Right ventricle myocardium superior (tissue), 1 donor: ENCODE measurements at regions of chr10 and their contacts with region 1.

Region 1: GRCh38 chr10:43689955-43690771 is 41.5 kb upstream of the ZNF32 start:
- DNase-seq: peak; percentile 93
- ATAC-seq: peak; percentile 98

Region 2: DNA sequence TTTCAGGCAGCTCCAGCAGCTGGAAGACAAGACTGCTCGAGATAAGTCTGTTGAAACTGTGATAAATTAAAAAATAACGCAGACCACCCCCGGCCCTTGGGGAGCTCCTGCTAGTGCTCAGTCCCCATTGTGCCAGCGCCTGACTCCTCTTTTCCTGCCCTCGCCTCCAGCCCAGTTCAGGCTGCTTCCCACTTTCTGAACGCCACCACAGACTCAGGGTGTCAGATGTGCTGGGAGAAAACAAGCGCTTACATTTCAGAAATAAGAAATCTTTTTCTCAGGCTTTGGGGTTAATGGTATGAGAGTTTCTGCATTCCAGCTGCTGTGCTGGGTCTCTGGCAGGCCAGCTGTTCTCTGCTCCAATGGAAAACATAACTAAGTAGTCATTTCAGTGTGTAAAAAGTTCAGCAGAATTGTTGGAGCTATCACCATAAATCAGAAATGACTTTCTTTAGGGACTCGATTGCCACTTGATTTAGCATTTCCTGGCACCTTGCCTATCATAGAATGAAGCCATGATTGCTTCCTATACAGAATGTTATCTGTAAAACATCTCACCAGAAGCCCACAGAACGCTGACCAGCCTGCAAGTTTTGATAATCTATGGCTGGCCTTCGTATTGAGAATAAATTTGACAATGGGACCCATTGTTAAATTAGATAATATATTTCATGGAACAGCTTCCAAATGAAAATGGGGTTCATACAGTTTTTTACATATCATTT is 215.5 kb after region 1 on chr10:
- intact Hi-C with region 1: loop called (anchors 10 kb)
- DNase-seq: peak; percentile 73
- ATAC-seq: peak; percentile 72

Region 3: DNA sequence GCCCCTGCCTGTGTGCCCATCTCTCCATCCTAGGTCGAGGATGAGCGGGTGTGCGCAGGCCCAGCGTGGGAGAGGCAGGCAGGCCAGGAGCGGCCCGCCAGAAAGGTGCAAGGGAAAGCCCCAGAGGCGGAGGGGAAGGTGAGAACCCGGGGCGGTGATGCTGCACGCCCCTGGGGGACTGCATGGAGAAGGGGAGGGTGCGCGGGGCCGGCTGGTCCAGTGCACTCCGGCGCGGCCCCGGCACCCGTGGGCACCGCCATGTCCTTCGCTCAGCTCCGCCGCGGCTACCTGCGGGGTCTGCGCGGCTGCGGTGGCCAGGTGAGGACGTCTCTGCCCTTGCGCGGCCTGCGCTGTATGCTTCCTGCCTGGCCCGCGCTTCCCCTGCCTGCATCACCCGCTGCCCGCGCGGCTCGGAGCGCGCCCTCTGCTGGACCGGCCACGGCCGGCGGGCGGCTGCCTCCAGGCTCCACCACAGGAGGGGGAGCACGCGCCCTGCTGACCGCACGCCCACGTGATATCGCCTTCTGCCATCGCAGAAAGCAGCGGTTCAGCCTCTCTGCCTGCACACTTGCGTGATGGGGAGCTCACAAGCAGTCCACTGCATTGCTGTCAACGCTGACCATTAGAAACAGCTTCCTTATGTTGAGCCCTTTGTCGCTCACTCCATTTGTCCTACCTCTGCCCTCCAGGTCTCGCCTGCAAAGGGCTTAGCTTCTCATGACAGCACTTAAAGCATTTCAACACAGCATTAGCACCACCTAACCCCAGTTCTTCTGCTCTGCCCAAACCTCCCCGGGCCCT is 620.8 kb after region 1 on chr10:
- intact Hi-C with region 1: loop called (anchors 5 kb)
- DNase-seq: peak; percentile 93
- ATAC-seq: peak; percentile 99